WTC11 (cell line): ENCODE measurements at regions of chr15 and their contacts with region 1.

Region 1: GRCh38 chr15:65101411-65101890 is 13.5 kb downstream of the UBAP1L start:
- DNase-seq: peak; percentile 93
- ATAC-seq: peak; percentile 76
- H3K4me3 Mint-ChIP-seq: peak overlapping the region; percentile 89
- H3K27ac Mint-ChIP-seq: peak overlapping the region; percentile 86
- H3K4me1 Mint-ChIP-seq: peaks cover 2% of the 10 kb centered on the region
- H3K27me3 Mint-ChIP-seq: peaks cover 10% of the 10 kb centered on the region
- CTCF ChIP-seq: peak; percentile 76

Region 2: GRCh38 chr15:65032801-65033537 is 68.5 kb before region 1 on chr15:
- CTCF ChIA-PET with region 1: interaction called, 68 read pairs
- POLR2A ChIA-PET with region 1: no interaction called
- DNase-seq: peak; percentile 83
- ATAC-seq: peak; percentile 86
- H3K4me3 Mint-ChIP-seq: peak overlapping the region; percentile 14; the same call in 1 of the 2 replicates
- H3K27ac Mint-ChIP-seq: no peak overlapping the region
- H3K4me1 Mint-ChIP-seq: peaks cover 18% of the 10 kb centered on the region
- H3K27me3 Mint-ChIP-seq: peaks cover 6% of the 10 kb centered on the region
- CTCF ChIP-seq: peak; percentile 51

Region 3: DNA sequence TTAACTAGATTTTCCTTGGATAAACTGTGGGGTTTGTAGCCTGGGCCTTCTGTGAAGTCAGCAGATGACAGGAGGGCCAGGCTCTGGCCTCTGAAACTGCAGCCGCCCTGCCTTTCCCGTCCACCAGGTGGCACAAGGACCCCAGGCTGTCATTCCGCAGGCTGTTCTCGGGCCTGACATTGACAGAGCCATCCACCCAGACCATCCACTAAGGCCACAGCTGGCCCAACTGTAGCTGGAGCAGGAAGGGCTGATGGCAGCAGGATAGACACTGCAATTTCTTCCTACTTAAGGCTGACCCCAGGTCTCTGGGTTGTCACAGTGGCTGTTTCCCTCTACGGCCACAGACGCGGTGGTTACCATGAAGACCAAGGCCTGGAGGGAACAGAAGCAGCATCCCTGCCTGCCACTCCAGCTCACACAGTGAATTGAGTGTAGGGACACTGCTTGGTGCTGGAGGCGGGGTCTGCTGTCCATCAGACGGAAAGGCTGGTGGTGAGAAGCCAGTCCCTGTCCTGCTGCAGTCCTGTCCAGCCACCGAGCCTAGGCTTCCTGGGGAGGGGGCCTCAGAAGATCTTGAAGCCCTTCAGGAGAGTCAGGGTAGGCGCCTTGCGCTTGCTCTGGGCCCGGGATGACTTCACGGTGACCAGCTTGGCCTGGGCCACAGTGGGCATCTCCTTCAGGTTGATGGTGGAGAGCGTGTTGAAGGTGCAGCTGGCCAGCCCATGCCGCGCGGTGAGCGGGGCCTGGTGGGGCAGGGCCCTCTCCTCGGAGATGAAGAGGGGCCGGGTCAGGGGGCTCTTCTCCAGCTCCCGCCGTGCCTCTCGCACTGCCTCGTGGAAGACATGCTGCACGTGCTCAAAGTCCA is 46.9 kb before region 1 on chr15:
- CTCF ChIA-PET with region 1: interaction called, 292 read pairs
- POLR2A ChIA-PET with region 1: interaction called, 3 read pairs
- DNase-seq: peak; percentile 86
- ATAC-seq: peak; percentile 82
- H3K4me3 Mint-ChIP-seq: no peak overlapping the region
- H3K27ac Mint-ChIP-seq: no peak overlapping the region
- H3K4me1 Mint-ChIP-seq: peaks cover 4% of the 10 kb centered on the region; the same call in 1 of the 2 replicates
- H3K27me3 Mint-ChIP-seq: peaks cover 2% of the 10 kb centered on the region; the same call in 1 of the 2 replicates
- CTCF ChIP-seq: peak; percentile 83

Region 4: DNA sequence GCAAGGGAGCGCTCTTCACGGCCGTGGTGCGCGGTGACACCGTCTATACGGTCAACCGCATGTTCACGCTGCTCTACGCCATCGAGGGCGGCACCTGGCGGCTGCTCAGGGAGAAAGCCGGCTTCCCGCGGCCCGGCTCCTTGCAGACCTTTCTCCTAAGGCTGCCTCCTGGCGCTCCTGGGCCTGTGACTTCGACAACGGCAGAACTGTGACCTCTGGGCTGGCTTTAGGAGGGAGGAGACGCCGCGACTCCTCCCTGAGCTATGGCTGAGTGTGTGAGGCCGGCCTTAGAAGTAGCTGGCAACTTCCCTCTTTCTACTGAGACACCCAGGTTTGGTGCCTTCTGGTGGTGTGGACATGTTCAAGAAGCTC is 23.5 kb before region 1 on chr15:
- CTCF ChIA-PET with region 1: interaction called, 308 read pairs
- POLR2A ChIA-PET with region 1: interaction called, 12 read pairs
- DNase-seq: peak; percentile 86
- ATAC-seq: peak; percentile 75
- H3K4me3 Mint-ChIP-seq: no peak overlapping the region
- H3K27ac Mint-ChIP-seq: no peak overlapping the region
- H3K4me1 Mint-ChIP-seq: peaks cover 32% of the 10 kb centered on the region
- H3K27me3 Mint-ChIP-seq: peaks cover 12% of the 10 kb centered on the region
- CTCF ChIP-seq: no peak

Region 5: GRCh38 chr15:65146438-65146837 is 45.0 kb after region 1 on chr15:
- CTCF ChIA-PET with region 1: interaction called, 12 read pairs
- POLR2A ChIA-PET with region 1: no interaction called
- DNase-seq: no peak
- ATAC-seq: no peak
- H3K4me3 Mint-ChIP-seq: no peak overlapping the region
- H3K27ac Mint-ChIP-seq: peak overlapping the region; percentile 14; the same call in 1 of the 2 replicates
- H3K4me1 Mint-ChIP-seq: no peaks in the 10 kb centered on the region; the same call in 1 of the 2 replicates
- H3K27me3 Mint-ChIP-seq: no peaks in the 10 kb centered on the region
- CTCF ChIP-seq: no peak

Region 6: DNA sequence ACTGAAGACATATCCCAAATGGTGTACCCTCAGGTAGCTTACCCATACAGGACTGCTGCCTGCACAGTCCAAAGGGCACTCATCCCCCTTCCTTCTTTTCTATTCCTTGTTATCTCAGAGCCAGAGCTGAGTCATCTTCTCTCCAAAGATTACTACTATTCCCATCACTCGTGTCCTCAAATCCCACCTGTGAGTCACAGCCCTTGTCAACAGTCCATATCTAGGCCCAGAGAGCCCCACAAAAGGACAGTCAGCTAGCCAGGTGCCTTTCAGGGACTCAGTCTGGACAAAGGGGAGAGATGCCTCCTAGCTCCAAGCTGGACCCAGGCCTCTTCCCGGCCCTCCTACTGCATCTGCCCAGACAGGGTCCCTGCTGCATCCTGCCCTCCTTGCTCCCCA is 174.3 kb after region 1 on chr15:
- CTCF ChIA-PET with region 1: interaction called, 10 read pairs
- POLR2A ChIA-PET with region 1: no interaction called
- DNase-seq: no peak
- ATAC-seq: no peak
- H3K4me3 Mint-ChIP-seq: no peak overlapping the region
- H3K27ac Mint-ChIP-seq: no peak overlapping the region; the same call in 1 of the 2 replicates
- H3K4me1 Mint-ChIP-seq: peaks cover 7% of the 10 kb centered on the region; the same call in 1 of the 2 replicates
- H3K27me3 Mint-ChIP-seq: no peaks in the 10 kb centered on the region
- CTCF ChIP-seq: no peak